HAP-1 (cell line): ENCODE measurements at regions of chr3 and their contacts with region 1.

Region 1: GRCh38 chr3:133040696-133041523 is 2.7 kb downstream of the TMEM108 start:
- DNase-seq: peak; percentile 44 to 80
- H3K4me3 ChIP-seq: no peak overlapping the region
- H3K4me1 ChIP-seq: no peaks in the 10 kb centered on the region
- H3K27me3 ChIP-seq: peaks cover 39% of the 10 kb centered on the region

Region 2: GRCh38 chr3:132730891-132731580 is 309.9 kb before region 1 on chr3:
- in situ Hi-C with region 1: loop called (anchors 25 kb)
- DNase-seq: peak; percentile 13 to 62
- H3K4me3 ChIP-seq: no peak overlapping the region
- H3K4me1 ChIP-seq: peaks cover 11% of the 10 kb centered on the region
- H3K27me3 ChIP-seq: peaks cover 2% of the 10 kb centered on the region; the same call in 1 of the 2 replicates

Region 3: GRCh38 chr3:133181392-133182150 is 140.7 kb after region 1 on chr3:
- in situ Hi-C with region 1: no loop called
- DNase-seq: no peak
- H3K4me3 ChIP-seq: no peak overlapping the region
- H3K4me1 ChIP-seq: no peaks in the 10 kb centered on the region
- H3K27me3 ChIP-seq: no peaks in the 10 kb centered on the region

Region 4: DNA sequence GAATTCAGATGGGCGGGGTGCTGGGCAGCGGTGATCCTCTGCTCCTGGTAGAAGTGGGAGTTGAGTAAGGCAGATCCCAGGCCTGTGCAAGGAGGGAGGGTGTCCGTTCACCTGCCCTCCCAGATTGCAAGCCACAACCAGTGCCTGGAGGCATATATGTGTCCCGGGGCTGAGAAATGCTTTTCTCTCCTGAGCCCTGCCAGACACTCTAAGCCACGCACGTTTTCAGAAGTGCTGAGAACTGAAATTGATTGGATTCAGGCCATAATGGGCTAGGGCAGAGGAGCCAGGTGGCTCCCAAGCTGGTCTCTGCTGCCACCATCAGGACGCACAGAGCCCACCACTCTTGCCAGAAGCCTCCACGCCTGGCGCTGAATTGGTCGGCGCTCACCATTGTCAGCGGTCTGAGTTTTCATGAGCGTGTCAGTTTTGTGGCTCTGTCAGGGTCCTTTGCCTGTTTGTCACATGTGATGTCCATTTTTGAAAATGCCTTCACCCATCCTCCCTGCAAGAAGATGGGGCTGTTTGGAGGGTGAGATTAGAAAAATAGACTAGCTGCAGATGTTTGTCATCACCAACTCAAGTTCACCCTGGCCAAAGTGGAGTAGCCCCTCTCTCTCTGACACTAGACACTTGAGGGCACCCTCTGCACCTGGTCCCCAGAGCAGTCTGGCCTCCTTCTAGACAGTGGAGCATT is 343.6 kb after region 1 on chr3:
- in situ Hi-C with region 1: loop called (anchors 5 kb)
- DNase-seq: peak; percentile 55 to 80
- H3K4me3 ChIP-seq: no peak overlapping the region
- H3K4me1 ChIP-seq: no peaks in the 10 kb centered on the region
- H3K27me3 ChIP-seq: 0 out of 2 replicates have a peak, but pooled peaks cover 2% of the 10 kb centered on the region